ENCODE measurements at regions of chr19 and their contacts with region 1.

Region 1: GRCh38 chr19:38224014-38224862 is at the start of gene DPF1:
- DNase-seq: no peak
- H3K4me3 ChIP-seq: no peak within 1 kb of the TSS
- H3K27ac ChIP-seq: no peak within 1 kb of the TSS
- H3K4me1 ChIP-seq: no peaks in the 10 kb centered on the region
- H3K27me3 ChIP-seq: no peaks in the 10 kb centered on the region
- CTCF ChIP-seq: no peak
- EP300 ChIP-seq: no peak
- POLR2A ChIP-seq: no peak
- total RNA-seq, gene DPF1: 0.23 to 1.0 (median 0.35) TPM in 5 of 7 donors, not detected in the others

Region 2: DNA sequence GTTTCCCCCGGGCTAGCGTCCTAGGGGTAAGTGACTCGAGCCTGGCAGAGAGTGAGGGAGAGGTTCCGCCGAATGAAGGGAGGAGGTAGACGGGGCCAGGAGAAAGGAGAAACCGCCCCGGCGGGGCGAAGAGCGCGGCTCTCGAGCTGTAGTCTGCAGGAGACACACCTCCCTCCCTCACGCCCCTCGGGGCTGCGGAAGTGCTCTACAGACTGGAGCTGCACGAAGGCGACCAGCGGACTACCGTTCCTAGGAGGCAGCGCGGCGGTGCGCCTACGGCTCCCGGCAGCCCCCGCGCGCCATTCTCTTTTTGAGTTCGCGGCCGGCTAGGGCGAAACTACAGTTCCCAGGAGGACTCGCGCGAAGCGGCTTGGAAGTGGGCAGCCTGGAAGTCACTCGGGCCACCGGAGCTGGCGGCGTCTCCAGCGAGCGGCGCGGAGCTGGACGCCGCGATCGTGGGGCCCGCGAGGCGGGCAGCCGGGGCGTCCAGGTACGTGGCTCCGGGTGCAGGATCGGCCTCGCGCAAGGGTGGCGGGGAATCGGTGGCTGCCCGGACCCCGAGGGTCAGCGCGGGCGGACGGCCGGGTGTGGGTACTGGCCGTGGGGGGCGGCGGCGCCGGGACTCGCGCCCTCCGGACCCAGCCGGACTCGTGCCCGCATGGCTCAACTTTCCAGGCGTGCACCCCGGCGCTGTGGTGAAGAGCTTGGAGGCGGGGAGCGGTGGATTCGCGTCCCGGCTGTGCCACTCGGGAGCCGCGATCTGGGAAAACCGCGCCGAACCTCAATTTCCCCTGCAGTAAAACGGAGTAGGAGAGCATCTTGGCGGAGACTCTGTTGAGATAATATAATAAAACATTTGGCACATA is 317.1 kb before region 1 on chr19 and contains the start of gene SIPA1L3:
- intact Hi-C with region 1: loop called in 3 of 4 experiments (anchors 10 kb)
- DNase-seq: peak; percentile 87 to 94 (median 89)
- H3K4me3 ChIP-seq: peak within 1 kb of the TSS; percentile 92
- H3K27ac ChIP-seq: no peak within 1 kb of the TSS
- H3K4me1 ChIP-seq: peaks cover 5% of the 10 kb centered on the region
- H3K27me3 ChIP-seq: no peaks in the 10 kb centered on the region
- CTCF ChIP-seq: no peak
- EP300 ChIP-seq: no peak
- POLR2A ChIP-seq: no peak
- total RNA-seq, gene SIPA1L3: 12.0 to 27.9 (median 19.5) TPM

Region 3: DNA sequence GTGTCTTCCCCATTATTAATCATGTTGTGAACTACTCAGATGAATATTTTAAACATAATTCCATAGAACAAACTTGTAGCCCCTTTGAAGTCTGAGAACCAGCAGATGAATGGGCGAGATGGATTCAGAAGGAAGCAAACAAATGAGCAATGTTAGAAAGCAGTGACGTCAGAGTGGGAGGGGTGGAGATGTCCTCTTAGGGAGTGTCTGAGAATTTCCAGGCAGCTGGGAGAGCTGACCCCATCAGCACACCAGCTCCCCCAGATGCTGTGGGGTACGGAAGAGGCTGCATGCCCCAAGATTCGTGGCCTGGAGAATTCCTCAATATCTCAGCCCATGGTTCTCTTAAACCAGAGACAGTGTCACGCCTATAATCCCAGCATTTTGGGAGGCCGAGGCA is 68.8 kb before region 1 on chr19:
- intact Hi-C with region 1: no loop called
- DNase-seq: no peak
- H3K4me3 ChIP-seq: no peak overlapping the region
- H3K27ac ChIP-seq: no peak overlapping the region
- H3K4me1 ChIP-seq: no peaks in the 10 kb centered on the region
- H3K27me3 ChIP-seq: no peaks in the 10 kb centered on the region
- CTCF ChIP-seq: no peak
- EP300 ChIP-seq: no peak
- POLR2A ChIP-seq: no peak